ENCODE measurements at regions of chr3 and their contacts with region 1.

Region 1: DNA sequence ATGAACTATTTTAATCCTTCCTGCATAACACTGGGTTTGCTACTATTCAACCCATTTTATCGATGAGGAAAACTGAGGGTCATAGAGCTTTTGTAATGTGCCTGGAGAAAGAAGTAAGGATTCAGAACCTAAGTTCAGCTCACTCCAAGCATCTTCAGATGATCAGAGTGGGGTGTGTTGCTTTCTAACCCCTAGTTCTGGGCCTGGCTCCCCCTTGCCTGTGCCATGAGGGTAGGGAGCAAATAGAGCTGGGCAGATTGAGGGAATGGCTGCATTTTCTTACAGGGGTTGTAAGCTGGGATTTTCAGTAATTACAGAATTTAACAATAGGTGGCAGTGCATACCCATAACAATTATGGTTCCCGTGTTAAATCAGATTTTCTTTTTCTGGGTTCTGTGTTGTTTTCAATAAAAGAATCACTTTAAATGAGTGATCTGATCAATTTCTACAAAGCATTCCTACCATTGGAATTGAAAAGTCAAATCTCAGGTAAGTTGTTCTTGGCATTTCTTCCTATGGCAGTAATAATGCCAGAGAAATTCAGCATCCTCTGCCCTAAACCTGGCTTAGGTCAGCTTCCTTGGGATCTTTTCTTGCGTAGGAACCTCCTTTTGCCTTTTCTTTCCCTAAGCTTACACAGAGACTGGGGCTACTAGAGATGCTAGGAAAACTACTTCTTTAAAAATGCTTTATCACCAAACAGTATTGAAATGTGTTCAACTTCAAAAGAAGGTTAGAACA is 103.8 kb upstream of the IL12A start:
- DNase-seq: peak; percentile 64
- ATAC-seq: peak; percentile 49
- H3K4me3 ChIP-seq: no peak overlapping the region
- H3K4me3 Mint-ChIP-seq: no peak overlapping the region
- H3K27ac ChIP-seq: no peak overlapping the region
- H3K27ac Mint-ChIP-seq: no peak overlapping the region
- H3K4me1 ChIP-seq: no peaks in the 10 kb centered on the region
- H3K4me1 Mint-ChIP-seq: no peaks in the 10 kb centered on the region
- H3K27me3 ChIP-seq: no peaks in the 10 kb centered on the region
- H3K27me3 Mint-ChIP-seq: peaks cover 6% of the 10 kb centered on the region
- CTCF ChIP-seq: peak; percentile 88

Region 2: DNA sequence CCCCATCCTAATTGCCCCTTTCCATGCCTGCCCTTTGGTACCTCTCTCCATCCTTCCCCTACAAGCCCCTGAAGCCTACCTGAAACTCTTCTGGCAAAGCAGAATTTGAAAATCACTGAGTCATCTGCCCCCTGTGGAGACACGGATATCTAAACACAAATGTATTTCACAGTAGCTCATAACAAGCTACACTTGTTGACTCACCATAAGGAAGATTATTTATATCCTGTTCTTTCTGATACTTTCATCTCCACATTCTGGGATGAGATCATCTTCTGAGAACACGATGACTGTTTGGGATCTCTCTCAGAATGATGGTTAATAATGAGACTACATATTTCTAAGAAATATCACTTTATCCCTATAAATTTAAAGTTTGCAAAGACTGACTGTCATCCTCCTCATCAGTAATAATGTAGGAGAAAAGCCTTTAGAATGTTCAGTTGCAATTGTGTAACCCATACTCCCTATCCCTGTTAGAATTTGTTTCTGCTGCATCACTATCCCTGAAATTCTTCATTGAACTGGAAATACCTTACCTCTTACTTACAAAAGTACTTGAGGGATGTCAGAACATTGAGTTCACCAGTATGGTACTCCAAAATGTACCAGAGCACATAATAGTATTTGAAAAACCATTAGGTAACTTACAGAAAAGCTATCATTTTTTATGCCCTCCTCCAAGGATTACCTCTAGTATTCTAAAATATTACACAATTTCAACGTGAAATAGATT is 12.3 kb before region 1 on chr3:
- CTCF ChIA-PET with region 1: interaction called, 46 read pairs
- POLR2A ChIA-PET with region 1: no interaction called
- intact Hi-C with region 1: no loop called
- DNase-seq: no peak
- ATAC-seq: no peak
- H3K4me3 ChIP-seq: no peak overlapping the region
- H3K4me3 Mint-ChIP-seq: no peak overlapping the region
- H3K27ac ChIP-seq: no peak overlapping the region
- H3K27ac Mint-ChIP-seq: no peak overlapping the region
- H3K4me1 ChIP-seq: no peaks in the 10 kb centered on the region
- H3K4me1 Mint-ChIP-seq: no peaks in the 10 kb centered on the region
- H3K27me3 ChIP-seq: no peaks in the 10 kb centered on the region
- H3K27me3 Mint-ChIP-seq: peaks cover 4% of the 10 kb centered on the region
- CTCF ChIP-seq: no peak

Region 3: DNA sequence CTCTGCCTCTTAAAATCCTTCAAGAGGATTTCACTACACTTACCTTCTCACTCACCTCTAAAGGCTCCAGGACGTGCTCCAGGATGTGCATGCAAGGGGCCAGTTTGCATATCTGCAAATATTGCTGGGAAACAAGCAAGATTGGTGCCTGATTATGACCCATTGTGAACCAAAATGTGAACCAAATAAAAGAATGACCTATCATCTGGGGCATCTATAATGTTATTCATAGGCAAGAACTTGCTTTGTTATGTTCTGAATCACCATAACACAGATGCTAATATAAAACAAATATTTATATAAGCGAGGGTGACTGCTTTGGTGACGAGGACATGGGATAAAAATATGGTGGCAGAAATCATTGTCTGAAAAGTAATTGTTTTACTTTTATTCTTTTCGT is 109.3 kb after region 1 on chr3:
- CTCF ChIA-PET with region 1: interaction called, 41 read pairs
- POLR2A ChIA-PET with region 1: no interaction called
- intact Hi-C with region 1: loop called (anchors 5 kb)
- DNase-seq: no peak
- ATAC-seq: no peak
- H3K4me3 ChIP-seq: no peak overlapping the region
- H3K4me3 Mint-ChIP-seq: no peak overlapping the region
- H3K27ac ChIP-seq: no peak overlapping the region
- H3K27ac Mint-ChIP-seq: no peak overlapping the region
- H3K4me1 ChIP-seq: peaks cover 3 to 11% of the 10 kb centered on the region in 2 donors
- H3K4me1 Mint-ChIP-seq: peaks cover 26% of the 10 kb centered on the region
- H3K27me3 ChIP-seq: no peaks in the 10 kb centered on the region
- H3K27me3 Mint-ChIP-seq: no peaks in the 10 kb centered on the region
- CTCF ChIP-seq: no peak

Region 4: GRCh38 chr3:160027541-160028195 is 142.8 kb after region 1 on chr3:
- CTCF ChIA-PET with region 1: interaction called, 18 read pairs
- POLR2A ChIA-PET with region 1: no interaction called
- intact Hi-C with region 1: no loop called
- DNase-seq: no peak
- ATAC-seq: no peak
- H3K4me3 ChIP-seq: no peak overlapping the region
- H3K4me3 Mint-ChIP-seq: no peak overlapping the region
- H3K27ac ChIP-seq: no peak overlapping the region
- H3K27ac Mint-ChIP-seq: no peak overlapping the region
- H3K4me1 ChIP-seq: no peaks in the 10 kb centered on the region
- H3K4me1 Mint-ChIP-seq: no peaks in the 10 kb centered on the region
- H3K27me3 ChIP-seq: no peaks in the 10 kb centered on the region
- H3K27me3 Mint-ChIP-seq: no peaks in the 10 kb centered on the region
- CTCF ChIP-seq: no peak

Region 5: DNA sequence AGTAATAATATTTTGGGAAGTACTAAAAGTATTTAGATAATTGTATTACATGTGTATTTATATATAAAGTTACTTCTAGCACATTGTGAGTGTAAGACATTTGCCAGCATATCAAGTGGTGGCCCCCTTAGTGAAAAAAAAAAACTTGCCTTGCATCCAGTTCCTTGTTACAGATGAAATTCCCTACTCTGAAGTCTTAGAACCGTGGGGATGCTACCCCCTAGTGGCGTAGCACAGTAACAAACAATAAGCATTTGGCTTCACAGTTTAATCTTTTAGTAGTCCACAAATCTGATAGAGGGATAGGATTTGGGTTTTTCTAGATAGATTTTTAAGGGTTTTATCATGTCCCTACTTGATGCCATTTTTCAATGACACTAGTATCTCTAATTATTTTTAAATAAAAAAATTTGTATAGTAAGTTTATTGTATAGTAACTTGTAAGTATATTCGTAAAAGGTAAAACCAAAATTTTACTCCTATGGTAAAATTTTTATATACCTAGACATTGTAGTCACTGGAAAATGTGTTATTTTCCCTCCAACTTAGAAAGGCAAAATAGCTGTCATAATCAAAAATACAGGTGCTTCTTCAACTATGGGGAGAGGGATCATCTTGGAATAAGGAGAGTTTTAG is 528.9 kb after region 1 on chr3:
- CTCF ChIA-PET with region 1: interaction called, 100 read pairs
- POLR2A ChIA-PET with region 1: no interaction called
- intact Hi-C with region 1: no loop called
- DNase-seq: peak; percentile 78
- ATAC-seq: peak; percentile 80
- H3K4me3 ChIP-seq: no peak overlapping the region
- H3K4me3 Mint-ChIP-seq: no peak overlapping the region
- H3K27ac ChIP-seq: no peak overlapping the region
- H3K27ac Mint-ChIP-seq: no peak overlapping the region
- H3K4me1 ChIP-seq: no peaks in the 10 kb centered on the region
- H3K4me1 Mint-ChIP-seq: no peaks in the 10 kb centered on the region
- H3K27me3 ChIP-seq: no peaks in the 10 kb centered on the region
- H3K27me3 Mint-ChIP-seq: no peaks in the 10 kb centered on the region
- CTCF ChIP-seq: peak; percentile 98